SK-N-SH (cell line): ENCODE measurements at regions of chr5 and their contacts with region 1.

Region 1: GRCh38 chr5:59174248-59174844 is 591.5 kb downstream of the RAB3C start:
- DNase-seq: peak; percentile 54
- H3K4me3 ChIP-seq: peak overlapping the region in 1 of 2 experiments; percentile 51; a peak in 1 of 4 replicates
- H3K27ac ChIP-seq: no peak overlapping the region
- H3K4me1 ChIP-seq: peaks cover 0 to 5% of the 10 kb centered on the region in 2 experiments; a peak in 2 of 4 replicates
- H3K27me3 ChIP-seq: no peaks in the 10 kb centered on the region
- CTCF ChIP-seq: peak; percentile 97
- EP300 ChIP-seq: no peak
- RAD21 ChIP-seq: peak; percentile 93

Region 2: GRCh38 chr5:58886315-58887207 is 287.8 kb before region 1 on chr5:
- CTCF ChIA-PET with region 1: interaction called, 37 read pairs
- POLR2A ChIA-PET with region 1: no interaction called
- DNase-seq: peak; percentile 72
- H3K4me3 ChIP-seq: no peak overlapping the region; a peak in 1 of 4 replicates
- H3K27ac ChIP-seq: no peak overlapping the region
- H3K4me1 ChIP-seq: peaks cover 0 to 7% of the 10 kb centered on the region in 2 experiments; a peak in 1 of 4 replicates
- H3K27me3 ChIP-seq: no peaks in the 10 kb centered on the region
- CTCF ChIP-seq: peak; percentile 94
- EP300 ChIP-seq: no peak
- RAD21 ChIP-seq: peak; percentile 82

Region 3: DNA sequence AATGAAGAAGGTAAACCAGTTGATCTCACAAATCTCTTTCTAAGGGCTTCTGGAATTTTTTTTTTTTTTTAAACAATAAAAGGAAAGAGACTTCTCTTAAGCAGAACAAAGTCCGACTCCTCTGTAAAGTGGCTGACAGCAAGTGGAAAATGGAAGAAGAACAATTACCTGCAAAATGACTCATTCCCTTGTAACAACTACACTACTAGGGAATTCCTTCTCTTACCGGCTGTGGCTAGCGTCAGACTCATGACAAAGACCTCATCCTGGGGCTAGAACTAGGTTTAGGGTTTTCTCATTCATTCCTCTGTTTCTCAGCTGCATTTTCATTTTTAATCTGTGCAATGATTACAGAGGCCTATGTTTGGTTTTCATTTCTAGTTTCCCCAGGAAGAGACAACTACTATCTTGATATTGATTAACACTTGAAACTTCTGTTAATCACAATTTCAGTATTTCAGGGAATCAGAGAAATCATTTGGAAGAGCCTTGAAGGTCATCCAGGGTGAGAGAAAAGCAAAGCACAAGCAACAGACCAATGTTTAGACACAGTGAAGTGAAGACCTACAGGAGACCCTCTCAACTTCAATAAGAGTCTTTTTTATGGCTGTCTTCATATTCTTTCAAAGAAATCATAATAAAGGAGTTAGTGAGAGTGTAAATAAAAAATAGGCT is 153.6 kb before region 1 on chr5:
- CTCF ChIA-PET with region 1: interaction called, 10 read pairs
- POLR2A ChIA-PET with region 1: no interaction called
- DNase-seq: no peak
- H3K4me3 ChIP-seq: no peak overlapping the region
- H3K27ac ChIP-seq: no peak overlapping the region
- H3K4me1 ChIP-seq: peaks cover 0 to 2% of the 10 kb centered on the region in 2 experiments; a peak in 1 of 4 replicates
- H3K27me3 ChIP-seq: no peaks in the 10 kb centered on the region
- CTCF ChIP-seq: no peak
- EP300 ChIP-seq: no peak
- RAD21 ChIP-seq: no peak

Region 4: GRCh38 chr5:59126708-59127573 is 47.4 kb before region 1 on chr5:
- CTCF ChIA-PET with region 1: interaction called, 31 read pairs
- POLR2A ChIA-PET with region 1: no interaction called
- DNase-seq: no peak
- H3K4me3 ChIP-seq: peak overlapping the region; percentile 42 to 46
- H3K27ac ChIP-seq: peak overlapping the region; percentile 91 to 99
- H3K4me1 ChIP-seq: peaks cover 17 to 33% of the 10 kb centered on the region in 2 experiments; a peak in 3 of 4 replicates
- H3K27me3 ChIP-seq: no peaks in the 10 kb centered on the region
- CTCF ChIP-seq: no peak
- EP300 ChIP-seq: no peak; a peak in 1 of 4 replicates
- RAD21 ChIP-seq: no peak

Region 5: GRCh38 chr5:59164041-59164830 is 10.1 kb before region 1 on chr5:
- CTCF ChIA-PET with region 1: interaction called, 12 read pairs
- POLR2A ChIA-PET with region 1: no interaction called
- DNase-seq: no peak
- H3K4me3 ChIP-seq: no peak overlapping the region
- H3K27ac ChIP-seq: peak overlapping the region; percentile 51 to 58
- H3K4me1 ChIP-seq: peaks cover 4% of the 10 kb centered on the region in 2 experiments; a peak in 2 of 4 replicates
- H3K27me3 ChIP-seq: no peaks in the 10 kb centered on the region
- CTCF ChIP-seq: no peak
- EP300 ChIP-seq: no peak
- RAD21 ChIP-seq: no peak

Region 6: GRCh38 chr5:59449905-59450644 is 275.7 kb after region 1 on chr5:
- CTCF ChIA-PET with region 1: no interaction called
- POLR2A ChIA-PET with region 1: no interaction called
- DNase-seq: no peak
- H3K4me3 ChIP-seq: no peak overlapping the region
- H3K27ac ChIP-seq: no peak overlapping the region
- H3K4me1 ChIP-seq: no peaks in the 10 kb centered on the region
- H3K27me3 ChIP-seq: no peaks in the 10 kb centered on the region
- CTCF ChIP-seq: 0 out of 2 replicates have a peak, but pooled peaks have one; percentile 21
- EP300 ChIP-seq: no peak
- RAD21 ChIP-seq: no peak